ENCODE measurements at regions of chr12 and their contacts with region 1.

Region 1: DNA sequence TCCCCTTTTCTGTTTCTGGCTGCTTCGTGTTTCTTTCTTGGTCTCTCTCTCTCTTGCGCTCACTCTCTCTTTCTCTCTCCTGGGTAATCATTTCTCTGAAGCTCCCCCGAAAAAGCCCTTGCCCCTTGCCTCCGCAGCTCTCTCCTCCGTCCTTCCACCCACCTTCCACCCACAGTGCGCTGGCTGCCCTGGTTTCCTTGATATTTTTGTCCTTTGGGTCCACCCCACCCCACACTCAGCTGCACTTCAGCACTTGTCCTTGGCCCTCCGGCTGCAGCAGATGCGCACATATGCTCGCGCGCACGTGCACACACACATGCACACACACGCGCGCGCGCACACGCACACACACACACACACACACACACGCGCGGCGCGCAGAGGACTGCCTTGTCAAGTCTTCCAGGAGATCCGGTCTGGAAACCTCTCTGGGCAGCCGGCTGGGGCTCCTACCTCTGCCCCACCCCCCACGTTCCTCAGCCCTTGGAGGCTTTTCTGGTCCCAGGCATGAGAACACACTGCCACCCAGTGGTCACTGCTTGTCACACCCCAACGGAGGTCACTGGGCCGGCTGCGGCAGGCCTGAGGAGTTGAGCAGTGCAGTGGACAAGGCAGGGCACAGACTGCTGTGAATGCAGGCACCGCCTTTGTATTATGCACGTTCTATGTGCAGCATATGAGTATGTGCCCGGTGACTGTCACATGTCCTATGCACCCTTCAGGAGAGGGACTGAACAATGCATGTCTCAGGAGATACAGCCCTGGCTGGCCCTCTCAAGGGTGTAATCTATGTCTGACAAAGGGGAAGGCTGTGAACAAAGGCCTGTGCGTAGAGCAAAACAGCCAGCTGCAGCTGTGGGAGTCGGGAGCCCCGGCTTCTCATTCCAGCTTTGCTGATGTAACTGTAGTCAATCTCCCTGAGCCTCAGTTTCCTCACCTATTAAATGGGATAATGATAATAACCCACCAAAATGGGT is 6.5 kb downstream of the LAG3 start:
- H3K4me3 Mint-ChIP-seq: peak overlapping the region; percentile 78
- H3K27ac Mint-ChIP-seq: peak overlapping the region; percentile 74
- H3K4me1 Mint-ChIP-seq: peaks cover 47% of the 10 kb centered on the region
- H3K27me3 Mint-ChIP-seq: peaks cover 49% of the 10 kb centered on the region

Region 2: DNA sequence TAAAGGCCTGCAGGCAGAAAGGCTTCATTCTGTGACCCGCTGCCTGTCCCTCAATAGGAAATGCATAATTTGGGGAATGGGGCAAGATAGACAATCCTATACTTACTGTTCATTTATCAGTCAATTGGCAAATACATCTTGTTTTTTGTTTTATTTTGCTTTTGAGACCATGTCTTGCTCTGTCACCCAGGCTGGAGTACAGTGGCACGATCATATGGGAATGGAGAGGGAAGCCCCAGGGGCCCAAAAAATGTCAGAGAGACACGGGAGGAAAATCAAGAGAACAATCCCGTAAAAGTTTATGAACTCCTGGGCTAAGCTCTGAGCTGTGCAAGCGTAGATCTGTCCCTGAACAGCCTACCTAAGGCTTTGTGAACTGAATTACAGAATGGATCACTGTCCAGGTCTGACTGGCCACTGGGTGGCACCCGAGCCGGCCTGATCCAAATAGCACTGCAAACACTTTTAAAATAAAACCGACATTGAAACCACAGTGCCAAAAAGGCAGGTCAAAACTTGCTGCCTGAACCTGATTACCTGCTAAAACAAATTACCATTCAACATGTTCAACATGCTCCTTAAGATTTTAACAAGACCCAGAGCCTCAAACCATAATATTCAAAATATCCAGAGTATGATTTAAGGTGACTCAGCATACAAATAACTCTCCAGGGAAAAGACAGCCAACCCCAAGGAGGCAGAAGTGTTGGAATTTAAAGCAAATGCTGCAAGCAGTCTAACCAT is 43.2 kb before region 1 on chr12:
- intact Hi-C with region 1: loop called (anchors 1 kb)
- H3K4me3 Mint-ChIP-seq: no peak overlapping the region
- H3K27ac Mint-ChIP-seq: peak overlapping the region; percentile 41
- H3K4me1 Mint-ChIP-seq: peaks cover 5% of the 10 kb centered on the region
- H3K27me3 Mint-ChIP-seq: no peaks in the 10 kb centered on the region

Measured in dendritic cell treated with granulocyte-macrophage colony-stimulating factor and Interleukin-4, amounts not matched to agents 40 ng/mL and 50 ng/mL, for 4 days (primary cell).